Gastrocnemius medialis (tissue), 4 donors: ENCODE measurements at regions of chr16 and their contacts with region 1.

Region 1: DNA sequence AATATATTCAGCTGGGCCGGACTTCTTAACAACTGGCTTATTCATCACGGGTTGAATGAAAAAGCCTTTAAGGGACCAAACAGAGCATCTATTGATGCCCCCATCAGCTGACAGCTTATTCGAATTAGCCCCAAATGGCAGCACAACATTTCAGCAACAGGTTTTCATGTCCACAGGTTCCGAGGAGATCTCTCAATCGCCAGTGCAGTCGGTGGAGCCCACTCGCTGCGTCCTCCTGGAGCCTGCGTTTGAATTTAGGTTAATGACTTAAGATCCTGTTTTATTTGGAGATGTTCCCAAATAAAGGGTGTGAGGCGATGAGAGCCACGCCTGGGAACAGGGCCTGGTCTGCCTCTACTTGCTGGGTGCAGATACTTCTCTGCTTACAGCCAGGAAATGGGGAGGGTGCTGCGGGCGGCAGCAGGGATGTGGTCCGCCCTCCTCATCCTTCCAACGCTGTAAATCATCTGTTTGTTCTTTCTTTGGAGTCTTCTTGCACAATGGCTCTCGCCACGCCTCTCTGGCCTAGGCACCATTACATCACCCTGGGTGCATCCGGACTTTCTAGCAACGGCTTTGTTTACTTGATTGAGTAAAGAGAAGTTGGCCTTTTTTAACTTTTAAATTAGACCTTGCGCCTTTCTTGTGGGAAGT is 22.6 kb downstream of the NDE1 start:
- DNase-seq: peak; percentile 91 to 95
- ATAC-seq: peak; percentile 99
- H3K4me3 ChIP-seq: peak overlapping the region; percentile 8 to 44 (median 22)
- H3K27ac ChIP-seq: peak overlapping the region; percentile 79 to 90 (median 83)
- H3K4me1 ChIP-seq: peaks cover 14 to 20% of the 10 kb centered on the region in 2 donors
- H3K27me3 ChIP-seq: no peaks in the 10 kb centered on the region
- CTCF ChIP-seq: no peak
- POLR2A ChIP-seq: peak in 1 of 2 donors; percentile 49

Region 2: GRCh38 chr16:15650019-15650697 is 22.5 kb before region 1 on chr16 and contains the start of gene NDE1:
- in situ Hi-C with region 1: no loop called
- intact Hi-C with region 1: loop called (anchors 2 kb)
- DNase-seq: peak; percentile 88
- ATAC-seq: peak; percentile 97 to 98
- H3K4me3 ChIP-seq: peak within 1 kb of the TSS; percentile 69 to 98 (median 80)
- H3K27ac ChIP-seq: peak within 1 kb of the TSS; percentile 81 to 95 (median 85)
- H3K4me1 ChIP-seq: peaks cover 5 to 13% of the 10 kb centered on the region in 2 donors
- H3K27me3 ChIP-seq: no peaks in the 10 kb centered on the region
- CTCF ChIP-seq: peak in 1 of 5 experiments; percentile 18
- POLR2A ChIP-seq: peak; percentile 68 to 73
- total RNA-seq, gene NDE1: 4.0 to 26.2 (median 11.9) TPM

Region 3: DNA sequence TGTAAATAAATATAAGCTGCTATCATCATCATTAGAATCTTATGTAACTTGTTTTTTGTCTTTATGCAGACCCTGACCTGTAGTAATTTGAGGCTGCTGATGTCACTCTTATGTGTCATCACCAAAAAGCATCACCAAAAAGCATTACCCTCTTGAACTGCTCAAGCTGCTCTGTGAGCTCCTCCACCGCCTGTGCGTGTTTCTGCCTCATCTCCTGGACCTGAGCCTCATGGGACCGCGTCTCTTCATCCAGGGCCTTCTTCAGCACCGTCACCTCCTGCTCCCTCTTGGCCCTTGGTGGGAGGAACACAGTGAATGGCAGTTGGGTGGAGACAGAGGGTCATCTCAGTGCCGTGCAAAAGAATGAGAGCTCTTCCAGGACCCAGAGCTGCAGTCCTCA is 59.8 kb after region 1 on chr16:
- in situ Hi-C with region 1: loop called in 1 of 4 experiments (anchors 10 kb)
- intact Hi-C with region 1: no loop called
- DNase-seq: no peak
- ATAC-seq: no peak
- H3K4me3 ChIP-seq: no peak overlapping the region
- H3K27ac ChIP-seq: no peak overlapping the region
- H3K4me1 ChIP-seq: no peaks in the 10 kb centered on the region
- H3K27me3 ChIP-seq: no peaks in the 10 kb centered on the region
- CTCF ChIP-seq: no peak
- POLR2A ChIP-seq: no peak